ENCODE measurements at regions of chr3 and their contacts with region 1.

Region 1: DNA sequence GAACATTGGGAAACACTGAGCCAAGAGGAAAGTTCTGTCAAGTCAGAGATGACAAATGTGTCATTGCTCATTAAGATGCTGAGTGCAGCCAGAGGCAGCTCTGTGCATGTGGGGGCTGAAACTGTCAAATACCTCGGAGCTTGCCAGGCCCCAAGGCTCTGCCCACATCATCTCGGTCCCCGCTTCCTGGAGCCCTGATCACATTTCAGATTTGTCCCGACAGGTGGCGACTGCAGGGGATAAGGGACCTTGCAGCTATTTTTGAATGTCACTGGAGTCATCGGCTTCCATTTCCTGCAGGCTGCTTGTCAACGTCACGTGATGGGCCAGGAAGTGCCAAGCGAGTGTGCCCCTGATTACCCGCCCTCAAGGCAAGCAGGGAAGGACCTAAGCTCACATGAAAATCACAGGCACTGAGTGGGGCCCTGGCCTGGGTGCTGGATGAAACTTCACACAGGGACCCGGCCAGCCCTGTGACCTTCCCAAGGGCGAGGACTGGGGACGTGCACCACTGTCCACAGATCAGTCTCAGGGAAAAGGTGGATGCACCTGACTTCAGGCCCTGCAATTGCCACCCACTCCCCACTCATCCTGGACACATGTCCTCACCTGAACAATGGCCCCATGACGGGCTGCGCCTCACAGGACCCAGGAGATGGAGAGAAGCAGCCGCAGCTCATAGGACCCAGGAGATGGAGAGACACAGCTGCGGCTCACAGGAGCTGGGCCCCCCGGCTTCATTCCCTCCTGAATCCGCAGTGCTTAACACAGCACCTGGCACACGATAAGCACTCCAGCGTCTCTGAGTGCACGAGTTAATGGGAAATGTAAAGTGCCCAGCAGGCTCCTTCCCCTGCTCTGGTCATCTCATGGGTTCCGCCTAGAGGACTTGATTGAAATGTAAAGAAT is 73.4 kb downstream of the NUP210 start:
- DNase-seq: peak in 1 of 2 experiments; percentile 73
- H3K4me3 ChIP-seq: peak overlapping the region in 1 of 4 experiments; percentile 32; a peak in 4 of 8 replicates
- H3K27ac ChIP-seq: peak overlapping the region; percentile 79
- H3K4me1 ChIP-seq: peaks cover 25 to 53% (median 36%) of the 10 kb centered on the region in 4 experiments
- H3K27me3 ChIP-seq: no peaks in the 10 kb centered on the region
- CTCF ChIP-seq: peak in 2 of 3 experiments; percentile 30 to 48; a peak in 2 of 4 replicates
- EP300 ChIP-seq: 0 out of 3 replicates have a peak, but pooled peaks of 1 of the 2 experiments have one; percentile 26
- POLR2A ChIP-seq: peak in 1 of 2 experiments; percentile 35; a peak in 1 of 3 replicates
- RAD21 ChIP-seq: peak; percentile 25 to 40; a peak in 2 of 4 replicates

Region 2: GRCh38 chr3:13282986-13283876 is 63.5 kb before region 1 on chr3:
- CTCF ChIA-PET with region 1: interaction called, 15 read pairs
- POLR2A ChIA-PET with region 1: interaction called, 3 read pairs
- DNase-seq: peak in 1 of 2 experiments; percentile 74
- H3K4me3 ChIP-seq: peak overlapping the region; percentile 18 to 67 (median 35)
- H3K27ac ChIP-seq: no peak overlapping the region
- H3K4me1 ChIP-seq: peaks cover 0 to 11% (median 6%) of the 10 kb centered on the region in 4 experiments; a peak in 5 of 7 replicates
- H3K27me3 ChIP-seq: peaks cover 7 to 26% (median 19%) of the 10 kb centered on the region in 4 experiments
- CTCF ChIP-seq: peak in 2 of 3 experiments; percentile 62 to 65; a peak in 3 of 4 replicates
- EP300 ChIP-seq: no peak
- POLR2A ChIP-seq: no peak
- RAD21 ChIP-seq: peak; percentile 56 to 69

Region 3: GRCh38 chr3:13324835-13325501 is 21.8 kb before region 1 on chr3:
- CTCF ChIA-PET with region 1: interaction called, 14 read pairs
- POLR2A ChIA-PET with region 1: interaction called, 3 read pairs
- DNase-seq: no peak
- H3K4me3 ChIP-seq: no peak overlapping the region
- H3K27ac ChIP-seq: no peak overlapping the region
- H3K4me1 ChIP-seq: no peaks in the 10 kb centered on the region
- H3K27me3 ChIP-seq: no peaks in the 10 kb centered on the region
- CTCF ChIP-seq: no peak
- EP300 ChIP-seq: no peak
- POLR2A ChIP-seq: no peak
- RAD21 ChIP-seq: no peak

Region 4: GRCh38 chr3:13364602-13365271 is 18.0 kb after region 1 on chr3:
- CTCF ChIA-PET with region 1: interaction called, 99 read pairs
- POLR2A ChIA-PET with region 1: interaction called, 20 read pairs
- DNase-seq: no peak
- H3K4me3 ChIP-seq: no peak overlapping the region
- H3K27ac ChIP-seq: peak overlapping the region; percentile 63; the same call in 1 of the 2 replicates
- H3K4me1 ChIP-seq: peaks cover 8 to 16% (median 14%) of the 10 kb centered on the region in 4 experiments
- H3K27me3 ChIP-seq: no peaks in the 10 kb centered on the region; a peak in 1 of 7 replicates
- CTCF ChIP-seq: peak in 1 of 3 experiments; percentile 14; a peak in 1 of 4 replicates
- EP300 ChIP-seq: no peak
- POLR2A ChIP-seq: no peak
- RAD21 ChIP-seq: peak in 1 of 2 experiments; percentile 16; a peak in 1 of 4 replicates

Region 5: DNA sequence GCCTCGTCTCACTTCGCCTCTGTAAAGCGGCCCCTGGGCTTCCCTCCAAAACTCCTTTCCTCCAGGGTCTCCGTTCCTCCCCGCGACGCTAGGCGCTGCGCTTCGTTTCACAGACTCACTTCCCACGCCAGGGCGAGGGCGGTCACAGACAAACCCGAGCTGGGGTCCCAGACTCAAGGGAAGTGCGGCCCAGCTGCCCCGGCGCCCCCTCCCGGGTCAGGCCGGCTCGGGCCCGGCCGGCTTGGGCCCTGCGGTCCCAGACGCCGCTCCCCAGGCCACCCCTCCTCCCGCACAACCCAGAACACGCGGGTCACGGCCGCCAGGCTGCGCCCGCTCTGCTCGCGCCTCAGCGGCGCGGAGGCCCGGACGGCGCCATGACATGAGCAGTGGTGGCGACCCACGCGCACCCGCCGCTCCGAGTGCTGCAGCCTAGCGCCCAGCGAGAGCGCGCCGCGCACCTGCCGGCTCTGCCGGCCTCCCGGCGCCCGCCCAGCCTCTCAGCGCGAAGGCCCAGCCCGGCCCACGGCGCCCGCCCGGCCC is 72.8 kb after region 1 on chr3:
- CTCF ChIA-PET with region 1: interaction called, 12 read pairs
- POLR2A ChIA-PET with region 1: interaction called, 3 read pairs
- DNase-seq: peak in 1 of 2 experiments; percentile 68
- H3K4me3 ChIP-seq: peak overlapping the region; percentile 55 to 85 (median 72)
- H3K27ac ChIP-seq: no peak overlapping the region; the same call in 1 of the 2 replicates
- H3K4me1 ChIP-seq: peaks cover 7 to 18% (median 12%) of the 10 kb centered on the region in 4 experiments
- H3K27me3 ChIP-seq: peaks cover 0 to 8% (median 0%) of the 10 kb centered on the region in 4 experiments; a peak in 4 of 7 replicates
- CTCF ChIP-seq: peak in 1 of 3 experiments; percentile 3; a peak in 1 of 4 replicates
- EP300 ChIP-seq: no peak
- POLR2A ChIP-seq: no peak
- RAD21 ChIP-seq: no peak

Region 6: GRCh38 chr3:13548696-13549622 is 202.2 kb after region 1 on chr3 and contains the start of gene FBLN2:
- CTCF ChIA-PET with region 1: no interaction called
- POLR2A ChIA-PET with region 1: no interaction called
- DNase-seq: peak in 1 of 2 experiments; percentile 86
- H3K4me3 ChIP-seq: peak within 1 kb of the TSS; percentile 32 to 55 (median 42)
- H3K27ac ChIP-seq: no peak within 1 kb of the TSS
- H3K4me1 ChIP-seq: peaks cover 0 to 28% (median 11%) of the 10 kb centered on the region in 4 experiments; a peak in 6 of 7 replicates
- H3K27me3 ChIP-seq: peaks cover 0 to 22% (median 18%) of the 10 kb centered on the region in 4 experiments; a peak in 6 of 7 replicates
- CTCF ChIP-seq: no peak
- EP300 ChIP-seq: no peak
- POLR2A ChIP-seq: peak in 1 of 2 experiments; percentile 24; a peak in 1 of 3 replicates
- RAD21 ChIP-seq: no peak
- total RNA-seq, gene FBLN2: 15.5 and 17.4 TPM in 2 replicates

Region 7: DNA sequence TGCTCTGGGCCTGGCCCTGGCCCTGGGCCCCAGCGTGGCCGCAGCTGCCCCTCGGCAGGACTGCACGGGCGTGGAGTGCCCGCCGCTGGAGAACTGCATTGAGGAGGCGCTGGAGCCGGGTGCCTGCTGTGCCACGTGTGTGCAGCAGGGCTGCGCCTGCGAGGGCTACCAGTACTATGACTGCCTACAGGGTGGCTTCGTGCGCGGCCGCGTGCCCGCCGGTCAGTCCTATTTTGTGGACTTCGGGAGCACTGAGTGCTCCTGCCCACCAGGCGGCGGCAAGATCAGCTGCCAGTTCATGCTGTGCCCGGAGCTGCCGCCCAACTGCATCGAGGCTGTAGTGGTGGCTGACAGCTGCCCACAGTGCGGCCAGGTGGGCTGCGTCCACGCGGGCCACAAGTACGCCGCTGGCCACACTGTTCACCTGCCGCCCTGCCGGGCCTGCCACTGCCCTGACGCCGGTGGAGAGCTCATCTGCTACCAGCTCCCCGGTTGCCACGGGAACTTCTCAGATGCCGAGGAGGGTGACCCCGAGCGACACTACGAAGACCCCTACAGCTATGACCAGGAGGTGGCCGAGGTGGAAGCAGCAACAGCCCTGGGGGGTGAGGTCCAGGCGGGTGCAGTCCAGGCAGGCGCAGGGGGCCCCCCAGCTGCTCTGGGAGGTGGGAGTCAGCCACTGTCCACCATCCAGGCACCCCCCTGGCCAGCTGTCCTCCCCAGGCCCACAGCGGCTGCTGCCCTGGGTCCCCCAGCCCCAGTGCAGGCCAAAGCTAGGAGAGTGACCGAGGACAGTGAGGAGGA is 223.9 kb after region 1 on chr3:
- CTCF ChIA-PET with region 1: no interaction called
- POLR2A ChIA-PET with region 1: no interaction called
- DNase-seq: no peak
- H3K4me3 ChIP-seq: no peak overlapping the region
- H3K27ac ChIP-seq: no peak overlapping the region
- H3K4me1 ChIP-seq: peaks cover 0 to 17% (median 7%) of the 10 kb centered on the region in 4 experiments; a peak in 5 of 7 replicates
- H3K27me3 ChIP-seq: no peaks in the 10 kb centered on the region; a peak in 1 of 7 replicates
- CTCF ChIP-seq: peak in 1 of 3 experiments; percentile 31; a peak in 2 of 4 replicates
- EP300 ChIP-seq: no peak
- POLR2A ChIP-seq: no peak
- RAD21 ChIP-seq: peak; percentile 13 to 42; a peak in 1 of 4 replicates

Measured in H1 (cell line).